Activated CD4-positive, alpha-beta T cell treated with anti-CD3 and anti-CD28 coated beads, Interleukin-2, amount 10 ng/mL, durations not matched to agents 24 days and 14 days (primary cell): ENCODE measurements at regions of chr4 and their contacts with region 1.

Region 1: DNA sequence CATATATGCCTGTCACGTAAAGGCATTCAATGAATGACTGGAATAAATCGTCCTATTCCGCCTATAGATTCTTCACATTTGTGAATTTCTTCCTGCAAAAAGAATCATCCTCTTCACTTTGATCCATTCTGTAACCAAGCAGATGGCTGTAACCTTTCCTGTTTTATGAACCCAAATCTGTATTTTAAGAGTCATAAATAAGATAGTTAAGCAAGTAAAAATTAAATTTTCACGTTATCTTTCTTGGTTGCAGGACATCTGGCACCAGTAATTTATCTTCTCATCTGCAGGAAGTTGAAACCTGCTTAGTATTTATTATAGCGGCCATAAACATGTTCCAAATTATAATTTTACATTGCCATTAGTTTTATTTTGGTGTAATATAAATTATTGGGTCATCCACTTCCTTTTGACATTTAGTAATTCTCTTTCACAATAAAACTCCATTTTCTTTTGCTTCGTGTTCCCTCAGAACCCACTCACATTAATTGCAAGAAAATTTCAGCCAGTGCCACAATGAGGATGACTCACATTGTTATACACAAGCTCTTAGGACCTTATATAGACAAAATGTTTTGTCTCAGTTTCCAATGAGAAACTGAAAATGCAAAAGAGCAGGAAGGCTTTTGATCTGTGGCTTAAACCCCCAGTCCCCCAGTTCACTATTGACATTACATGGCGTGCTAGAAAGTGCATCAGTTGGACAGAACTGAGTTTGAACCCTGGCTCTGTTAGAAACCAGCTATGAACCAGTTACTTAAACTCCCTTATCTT is 51.1 kb downstream of the TMEM156 start:
- DNase-seq: peak; percentile 73
- H3K4me3 Mint-ChIP-seq: peak overlapping the region; percentile 69
- H3K27ac Mint-ChIP-seq: peak overlapping the region; percentile 87
- H3K4me1 Mint-ChIP-seq: peaks cover 55% of the 10 kb centered on the region
- H3K27me3 Mint-ChIP-seq: no peaks in the 10 kb centered on the region

Region 2: DNA sequence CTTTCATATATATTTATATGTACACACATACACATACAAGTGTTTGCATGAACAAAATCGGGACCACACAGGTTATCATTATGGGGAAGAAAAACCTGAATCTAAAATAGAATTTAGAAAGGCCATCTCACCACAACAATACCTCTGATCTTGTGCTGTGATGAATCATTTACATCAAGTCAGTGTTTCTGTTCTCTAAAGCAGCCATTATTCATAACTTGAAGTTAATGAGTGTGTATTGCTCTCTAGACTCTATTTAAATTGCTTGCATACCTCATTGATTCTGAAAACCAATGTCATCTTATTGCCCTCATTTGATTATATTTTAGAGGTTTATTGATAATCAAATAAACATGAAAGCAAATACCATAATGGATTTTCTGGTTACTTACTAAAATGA is 41.9 kb before region 1 on chr4:
- intact Hi-C with region 1: loop called (anchors 1 kb)
- DNase-seq: no peak
- H3K4me3 Mint-ChIP-seq: no peak overlapping the region
- H3K27ac Mint-ChIP-seq: peak overlapping the region; percentile 51
- H3K4me1 Mint-ChIP-seq: peaks cover 36% of the 10 kb centered on the region
- H3K27me3 Mint-ChIP-seq: no peaks in the 10 kb centered on the region